PC-9 (cell line): ENCODE measurements at regions of chr1 and their contacts with region 1.

Region 1: DNA sequence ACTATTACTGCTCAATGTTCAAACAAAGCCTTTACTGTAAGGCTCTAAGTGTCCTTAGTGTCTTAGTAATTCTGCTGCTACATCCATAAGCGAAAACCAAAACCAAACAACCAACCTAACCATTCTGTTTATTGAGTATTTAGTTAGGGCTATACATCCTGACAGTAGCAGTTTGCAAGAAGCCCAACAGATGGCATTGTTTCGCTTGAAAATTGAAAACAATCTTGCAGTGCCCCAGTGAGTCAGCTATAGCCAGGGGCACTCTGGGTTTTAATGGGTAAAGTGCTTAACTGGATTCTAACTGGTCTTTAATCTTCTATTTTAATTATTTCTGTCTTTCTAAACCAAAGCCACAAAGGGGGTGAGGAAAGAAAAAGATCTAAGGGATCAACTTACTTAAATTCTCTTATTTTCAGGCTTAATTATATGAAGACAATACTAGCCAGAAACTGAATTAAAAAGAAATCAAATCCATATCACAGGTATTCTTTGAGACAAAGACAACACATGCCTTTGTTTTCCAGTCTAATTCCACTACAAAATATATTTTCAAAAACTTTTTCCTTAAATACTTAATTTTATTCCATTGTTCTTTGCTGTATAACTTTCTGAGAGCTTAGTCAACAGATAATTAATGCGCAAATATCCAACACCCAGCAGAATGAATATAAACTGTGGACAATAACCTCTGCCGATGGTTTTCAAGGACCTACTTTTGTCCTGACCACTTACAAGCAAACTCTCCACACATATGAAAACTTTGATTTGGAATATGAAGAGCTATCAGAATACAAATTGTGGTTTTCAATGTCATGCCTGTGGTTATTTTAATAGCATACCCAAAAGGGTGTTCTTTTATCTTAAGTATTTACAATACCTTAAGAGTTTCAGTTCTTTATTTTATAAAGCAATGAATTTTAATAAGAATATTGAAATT is 15.2 kb downstream of the POGZ start:
- DNase-seq: peak; percentile 62 to 77
- H3K4me3 ChIP-seq: no peak overlapping the region
- H3K27ac ChIP-seq: peak overlapping the region; percentile 62
- H3K4me1 ChIP-seq: peaks cover 11% of the 10 kb centered on the region
- H3K27me3 ChIP-seq: no peaks in the 10 kb centered on the region
- CTCF ChIP-seq: peak; percentile 84

Region 2: DNA sequence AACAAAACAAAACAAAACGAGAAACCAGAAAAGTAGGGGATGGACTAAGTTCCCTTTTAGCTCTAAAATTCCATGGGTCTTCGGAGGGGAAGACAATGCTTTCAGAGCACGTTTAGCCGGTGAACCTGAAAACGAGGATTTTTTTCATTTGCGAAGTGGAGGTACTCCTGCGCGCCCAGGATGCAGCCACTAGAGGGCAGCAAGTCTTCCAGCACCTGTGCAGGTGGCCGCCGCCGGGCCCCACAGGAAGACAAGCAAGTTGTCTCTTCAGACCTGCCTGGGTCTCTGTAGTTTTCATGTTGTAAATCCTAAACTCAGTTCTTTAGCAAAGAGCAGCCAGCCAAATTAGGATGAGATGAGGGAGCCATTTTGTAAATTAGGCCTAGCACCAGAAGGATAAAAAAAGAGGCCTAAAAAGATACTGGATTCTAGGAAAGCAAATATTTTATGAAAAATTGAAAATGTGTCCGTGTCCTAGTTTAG is 150.1 kb after region 1 on chr1:
- CTCF ChIA-PET with region 1: no interaction called
- POLR2A ChIA-PET with region 1: no interaction called
- intact Hi-C with region 1: loop called (anchors 5 kb)
- DNase-seq: peak; percentile 54 to 82
- H3K4me3 ChIP-seq: no peak overlapping the region
- H3K27ac ChIP-seq: no peak overlapping the region
- H3K4me1 ChIP-seq: peaks cover 30% of the 10 kb centered on the region
- H3K27me3 ChIP-seq: no peaks in the 10 kb centered on the region
- CTCF ChIP-seq: peak; percentile 94